CD4-positive, alpha-beta T cell (primary cell): ENCODE measurements at regions of chr14 and their contacts with region 1.

Region 1: GRCh38 chr14:100375963-100376735 is 53.0 kb downstream of the SLC25A47 start:
- DNase-seq: peak; percentile 84 to 96 (median 90)
- ATAC-seq: peak; percentile 84
- H3K4me3 ChIP-seq: peak within 1 kb of the TSS; percentile 98
- H3K4me3 Mint-ChIP-seq: peak within 1 kb of the TSS; percentile 95
- H3K27ac ChIP-seq: peak within 1 kb of the TSS; percentile 65 to 85
- H3K27ac Mint-ChIP-seq: peak within 1 kb of the TSS; percentile 73
- H3K4me1 ChIP-seq: peaks cover 30% of the 10 kb centered on the region
- H3K4me1 Mint-ChIP-seq: peaks cover 40% of the 10 kb centered on the region
- H3K27me3 ChIP-seq: no peaks in the 10 kb centered on the region
- H3K27me3 Mint-ChIP-seq: no peaks in the 10 kb centered on the region
- CTCF ChIP-seq: no peak

Region 2: GRCh38 chr14:99604283-99604765 is 771.8 kb before region 1 on chr14:
- CTCF ChIA-PET with region 1: no interaction called
- POLR2A ChIA-PET with region 1: no interaction called
- intact Hi-C with region 1: loop called in 1 of 2 experiments (anchors 10 kb)
- DNase-seq: peak; percentile 89 to 98 (median 96)
- ATAC-seq: peak; percentile 91
- H3K4me3 ChIP-seq: peak overlapping the region; percentile 88
- H3K4me3 Mint-ChIP-seq: peak overlapping the region; percentile 88
- H3K27ac ChIP-seq: peak overlapping the region; percentile 66 to 77
- H3K27ac Mint-ChIP-seq: peak overlapping the region; percentile 85
- H3K4me1 ChIP-seq: peaks cover 50% of the 10 kb centered on the region
- H3K4me1 Mint-ChIP-seq: peaks cover 47% of the 10 kb centered on the region
- H3K27me3 ChIP-seq: no peaks in the 10 kb centered on the region
- H3K27me3 Mint-ChIP-seq: no peaks in the 10 kb centered on the region
- CTCF ChIP-seq: no peak

Region 3: GRCh38 chr14:99636487-99636886 is 739.7 kb before region 1 on chr14:
- CTCF ChIA-PET with region 1: no interaction called
- POLR2A ChIA-PET with region 1: no interaction called
- intact Hi-C with region 1: no loop called
- DNase-seq: no peak
- ATAC-seq: no peak
- H3K4me3 ChIP-seq: no peak overlapping the region
- H3K4me3 Mint-ChIP-seq: no peak overlapping the region
- H3K27ac ChIP-seq: no peak overlapping the region
- H3K27ac Mint-ChIP-seq: no peak overlapping the region
- H3K4me1 ChIP-seq: no peaks in the 10 kb centered on the region
- H3K4me1 Mint-ChIP-seq: no peaks in the 10 kb centered on the region
- H3K27me3 ChIP-seq: no peaks in the 10 kb centered on the region
- H3K27me3 Mint-ChIP-seq: no peaks in the 10 kb centered on the region
- CTCF ChIP-seq: no peak

Region 4: DNA sequence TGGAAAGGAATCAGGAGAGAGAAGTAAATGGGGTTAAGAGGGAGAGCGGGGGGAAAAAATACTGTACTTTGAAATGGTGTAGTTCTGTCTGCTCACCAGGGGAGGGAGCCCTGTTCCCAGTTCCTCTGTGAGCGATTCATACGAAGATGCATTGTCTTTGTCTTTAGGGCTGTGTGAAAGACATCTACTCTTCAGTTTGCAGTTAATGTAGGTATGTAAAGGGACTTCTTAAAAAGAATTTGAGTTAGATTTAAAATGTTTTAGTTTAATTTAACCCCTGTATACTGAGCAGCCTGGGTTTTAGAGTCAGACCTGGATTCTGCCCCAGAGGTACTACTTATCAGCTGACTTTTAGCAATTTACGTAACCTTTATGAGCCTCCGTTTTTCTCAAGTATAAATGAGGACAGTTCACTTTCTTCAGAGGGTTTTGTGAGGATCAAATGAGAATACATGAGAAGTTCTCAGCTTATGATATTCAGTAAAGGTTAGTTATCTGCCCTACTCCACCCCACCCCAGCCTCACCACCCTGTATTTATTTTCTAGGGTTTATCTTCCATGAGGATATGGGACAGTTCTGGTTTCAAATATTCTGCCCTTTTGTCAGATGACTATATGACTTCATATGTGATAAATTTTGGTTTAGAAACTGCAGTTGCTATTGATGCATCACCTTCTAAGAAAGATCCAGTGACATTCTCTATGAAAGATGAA is 393.5 kb before region 1 on chr14:
- CTCF ChIA-PET with region 1: no interaction called
- POLR2A ChIA-PET with region 1: no interaction called
- intact Hi-C with region 1: loop called (anchors 1 kb)
- DNase-seq: peak; percentile 33 to 86 (median 60)
- ATAC-seq: peak; percentile 100
- H3K4me3 ChIP-seq: no peak overlapping the region
- H3K4me3 Mint-ChIP-seq: no peak overlapping the region
- H3K27ac ChIP-seq: no peak overlapping the region
- H3K27ac Mint-ChIP-seq: peak overlapping the region; percentile 34
- H3K4me1 ChIP-seq: peaks cover 3% of the 10 kb centered on the region
- H3K4me1 Mint-ChIP-seq: peaks cover 23% of the 10 kb centered on the region
- H3K27me3 ChIP-seq: no peaks in the 10 kb centered on the region
- H3K27me3 Mint-ChIP-seq: no peaks in the 10 kb centered on the region
- CTCF ChIP-seq: peak; percentile 95

Region 5: GRCh38 chr14:100147181-100147631 is 228.9 kb before region 1 on chr14:
- CTCF ChIA-PET with region 1: no interaction called
- POLR2A ChIA-PET with region 1: no interaction called
- intact Hi-C with region 1: loop called in 1 of 2 experiments (anchors 2 kb)
- DNase-seq: peak; percentile 33 to 84 (median 60)
- ATAC-seq: peak; percentile 62
- H3K4me3 ChIP-seq: peak overlapping the region; percentile 20
- H3K4me3 Mint-ChIP-seq: peak overlapping the region; percentile 60
- H3K27ac ChIP-seq: peak overlapping the region in 1 of 2 donors; percentile 21
- H3K27ac Mint-ChIP-seq: peak overlapping the region; percentile 85
- H3K4me1 ChIP-seq: peaks cover 32% of the 10 kb centered on the region
- H3K4me1 Mint-ChIP-seq: peaks cover 25% of the 10 kb centered on the region
- H3K27me3 ChIP-seq: no peaks in the 10 kb centered on the region
- H3K27me3 Mint-ChIP-seq: no peaks in the 10 kb centered on the region
- CTCF ChIP-seq: no peak

Region 6: DNA sequence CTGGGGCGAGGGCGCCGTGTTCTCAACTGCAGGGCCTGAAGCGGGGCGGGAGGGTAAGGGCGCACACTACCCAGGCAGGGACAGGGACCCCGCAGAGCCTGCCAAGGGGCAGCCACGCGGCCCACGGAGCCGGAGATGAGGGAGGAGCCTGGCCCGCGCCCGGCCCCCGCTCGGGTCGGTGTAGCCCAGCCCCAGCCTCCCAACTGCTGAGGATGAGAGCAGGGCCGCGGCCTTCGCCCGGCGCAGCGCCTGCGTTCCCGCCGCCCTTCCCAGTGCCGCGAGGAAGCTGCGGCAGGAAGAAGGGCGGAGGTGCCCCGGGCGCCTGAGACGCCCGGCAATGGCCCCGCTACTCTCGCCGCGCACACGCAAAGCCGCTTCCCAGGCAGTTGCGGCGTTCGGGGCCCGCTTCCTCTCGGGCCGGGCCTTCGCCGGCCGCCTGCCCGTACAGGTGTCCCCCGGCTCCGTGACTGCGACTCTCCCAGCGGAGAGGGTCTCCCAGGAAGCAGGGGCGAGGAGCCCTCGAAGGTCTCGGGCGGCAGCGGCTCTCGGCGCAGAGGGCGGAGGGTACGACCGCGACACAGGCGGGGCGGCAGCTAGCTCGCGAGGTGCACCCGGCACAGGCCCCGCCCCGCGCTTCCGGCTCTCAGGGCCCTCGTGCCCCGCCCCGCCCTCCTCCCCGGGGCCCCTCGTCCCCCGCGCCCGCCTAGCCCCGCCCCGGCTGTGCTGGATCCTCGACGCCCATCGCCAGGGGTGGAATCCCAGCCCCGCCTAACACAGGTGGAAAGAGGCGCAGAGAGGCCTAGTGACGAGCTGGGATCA is 162.0 kb before region 1 on chr14:
- CTCF ChIA-PET with region 1: no interaction called
- POLR2A ChIA-PET with region 1: no interaction called
- intact Hi-C with region 1: loop called in 1 of 2 experiments (anchors 2 kb)
- DNase-seq: peak; percentile 83 to 98 (median 92)
- ATAC-seq: peak; percentile 96
- H3K4me3 ChIP-seq: peak overlapping the region; percentile 66
- H3K4me3 Mint-ChIP-seq: peak overlapping the region; percentile 89
- H3K27ac ChIP-seq: peak overlapping the region; percentile 79 to 89
- H3K27ac Mint-ChIP-seq: peak overlapping the region; percentile 91
- H3K4me1 ChIP-seq: peaks cover 32% of the 10 kb centered on the region
- H3K4me1 Mint-ChIP-seq: peaks cover 32% of the 10 kb centered on the region
- H3K27me3 ChIP-seq: no peaks in the 10 kb centered on the region
- H3K27me3 Mint-ChIP-seq: no peaks in the 10 kb centered on the region
- CTCF ChIP-seq: no peak

Region 7: DNA sequence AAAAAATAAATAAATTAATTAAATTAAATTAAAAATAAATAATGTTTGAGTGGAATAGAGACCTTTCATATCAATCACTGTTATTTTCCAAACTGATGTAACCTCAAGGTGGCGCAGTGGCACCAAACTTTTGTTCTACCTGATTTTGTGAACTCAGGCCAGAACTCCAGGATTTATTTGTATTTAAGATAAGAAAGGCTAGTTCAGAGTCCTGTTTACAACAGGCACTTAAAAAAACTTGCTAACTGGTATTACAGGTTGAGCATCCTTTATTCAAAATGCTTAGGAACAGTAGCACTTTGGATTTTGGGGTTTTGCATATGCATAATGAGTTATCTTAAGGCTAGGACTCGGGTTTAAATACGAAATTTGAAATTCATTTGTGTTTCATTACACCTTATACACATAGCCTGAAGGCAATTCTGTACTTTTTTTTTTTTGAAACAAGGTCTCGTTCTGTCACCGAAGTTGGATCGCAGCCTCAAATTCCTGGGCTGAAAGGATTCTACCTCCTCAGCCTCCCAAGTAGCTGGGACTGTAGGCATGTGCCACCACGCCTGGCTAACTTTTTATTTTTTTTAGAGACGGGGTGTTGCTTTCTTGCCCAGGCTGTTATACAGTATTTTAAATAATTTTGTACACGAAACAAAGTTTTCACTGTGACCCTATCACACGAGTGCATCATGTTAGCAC is 104.8 kb before region 1 on chr14:
- CTCF ChIA-PET with region 1: interaction called, 3 read pairs
- POLR2A ChIA-PET with region 1: no interaction called
- intact Hi-C with region 1: loop called in 1 of 2 experiments (anchors 5 kb)
- DNase-seq: peak in 8 of 14 experiments; percentile 9 to 56 (median 30)
- ATAC-seq: no peak
- H3K4me3 ChIP-seq: no peak overlapping the region
- H3K4me3 Mint-ChIP-seq: no peak overlapping the region
- H3K27ac ChIP-seq: no peak overlapping the region
- H3K27ac Mint-ChIP-seq: peak overlapping the region; percentile 39
- H3K4me1 ChIP-seq: peaks cover 30% of the 10 kb centered on the region
- H3K4me1 Mint-ChIP-seq: peaks cover 75% of the 10 kb centered on the region
- H3K27me3 ChIP-seq: no peaks in the 10 kb centered on the region
- H3K27me3 Mint-ChIP-seq: no peaks in the 10 kb centered on the region
- CTCF ChIP-seq: peak; percentile 29

Region 8: GRCh38 chr14:100306420-100307219 is 69.5 kb before region 1 on chr14 and contains the start of gene SLC25A29:
- CTCF ChIA-PET with region 1: no interaction called
- POLR2A ChIA-PET with region 1: no interaction called
- intact Hi-C with region 1: loop called in 1 of 2 experiments (anchors 5 kb)
- DNase-seq: peak; percentile 25 to 84 (median 68)
- ATAC-seq: peak; percentile 76
- H3K4me3 ChIP-seq: peak within 1 kb of the TSS; percentile 57
- H3K4me3 Mint-ChIP-seq: peak within 1 kb of the TSS; percentile 93
- H3K27ac ChIP-seq: no peak within 1 kb of the TSS
- H3K27ac Mint-ChIP-seq: no peak within 1 kb of the TSS
- H3K4me1 ChIP-seq: peaks cover 29% of the 10 kb centered on the region
- H3K4me1 Mint-ChIP-seq: peaks cover 9% of the 10 kb centered on the region
- H3K27me3 ChIP-seq: peaks cover 4 to 6% of the 10 kb centered on the region in 2 experiments
- H3K27me3 Mint-ChIP-seq: peaks cover 10% of the 10 kb centered on the region
- CTCF ChIP-seq: no peak
- total RNA-seq, gene SLC25A29: 2.5 TPM